Vagina (tissue), 2 donors: ENCODE measurements at regions of chr5 and their contacts with region 1.

Region 1: DNA sequence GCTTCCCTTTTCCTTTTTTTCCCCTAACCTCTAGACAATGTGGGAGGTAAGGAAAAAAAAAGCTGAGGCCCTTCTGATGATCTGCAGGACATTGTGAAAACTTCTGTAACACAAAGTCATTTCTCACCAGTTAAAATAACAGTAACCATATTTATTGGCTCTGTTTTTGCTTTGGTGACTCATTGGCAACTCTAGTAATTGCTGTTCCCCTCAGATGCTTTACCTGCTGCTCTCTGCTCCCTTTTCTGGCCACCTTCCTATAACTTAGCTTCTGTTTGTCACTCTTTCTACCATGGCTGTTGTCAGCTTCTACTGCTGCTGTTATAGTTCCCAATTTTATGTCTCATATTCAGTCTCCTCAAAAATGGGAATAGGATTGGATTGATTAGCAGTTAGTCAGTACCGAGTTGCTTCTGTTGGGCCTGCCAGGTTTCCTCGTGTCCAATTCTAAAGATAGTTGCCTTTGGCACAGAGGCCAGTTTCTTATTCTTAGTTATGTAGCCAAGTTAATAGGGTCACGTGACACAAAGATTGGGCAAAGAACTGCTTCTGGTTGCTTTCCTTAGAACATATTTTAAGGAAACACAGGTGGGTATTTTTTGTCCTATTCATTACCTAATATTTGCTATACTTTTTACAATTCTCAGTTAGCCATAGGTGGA is 16.8 kb downstream of the SCAMP1 start:
- DNase-seq: no peak
- H3K4me3 ChIP-seq: no peak overlapping the region
- H3K27ac ChIP-seq: no peak overlapping the region
- H3K4me1 ChIP-seq: peaks cover 12% of the 10 kb centered on the region
- H3K27me3 ChIP-seq: no peaks in the 10 kb centered on the region
- CTCF ChIP-seq: no peak
- POLR2A ChIP-seq: no peak

Region 2: GRCh38 chr5:77463905-77464304 is 913.3 kb before region 1 on chr5:
- intact Hi-C with region 1: no loop called
- DNase-seq: no peak
- H3K4me3 ChIP-seq: no peak overlapping the region
- H3K27ac ChIP-seq: no peak overlapping the region
- H3K4me1 ChIP-seq: no peaks in the 10 kb centered on the region
- H3K27me3 ChIP-seq: no peaks in the 10 kb centered on the region
- CTCF ChIP-seq: no peak
- POLR2A ChIP-seq: no peak

Region 3: GRCh38 chr5:78447775-78448424 is 70.7 kb after region 1 on chr5:
- intact Hi-C with region 1: loop called (anchors 5 kb)
- DNase-seq: no peak
- H3K4me3 ChIP-seq: no peak overlapping the region
- H3K27ac ChIP-seq: no peak overlapping the region
- H3K4me1 ChIP-seq: no peaks in the 10 kb centered on the region
- H3K27me3 ChIP-seq: no peaks in the 10 kb centered on the region
- CTCF ChIP-seq: no peak
- POLR2A ChIP-seq: no peak